Naive thymus-derived CD8-positive, alpha-beta T cell (primary cell): ENCODE measurements at regions of chr6 and their contacts with region 1.

Region 1: DNA sequence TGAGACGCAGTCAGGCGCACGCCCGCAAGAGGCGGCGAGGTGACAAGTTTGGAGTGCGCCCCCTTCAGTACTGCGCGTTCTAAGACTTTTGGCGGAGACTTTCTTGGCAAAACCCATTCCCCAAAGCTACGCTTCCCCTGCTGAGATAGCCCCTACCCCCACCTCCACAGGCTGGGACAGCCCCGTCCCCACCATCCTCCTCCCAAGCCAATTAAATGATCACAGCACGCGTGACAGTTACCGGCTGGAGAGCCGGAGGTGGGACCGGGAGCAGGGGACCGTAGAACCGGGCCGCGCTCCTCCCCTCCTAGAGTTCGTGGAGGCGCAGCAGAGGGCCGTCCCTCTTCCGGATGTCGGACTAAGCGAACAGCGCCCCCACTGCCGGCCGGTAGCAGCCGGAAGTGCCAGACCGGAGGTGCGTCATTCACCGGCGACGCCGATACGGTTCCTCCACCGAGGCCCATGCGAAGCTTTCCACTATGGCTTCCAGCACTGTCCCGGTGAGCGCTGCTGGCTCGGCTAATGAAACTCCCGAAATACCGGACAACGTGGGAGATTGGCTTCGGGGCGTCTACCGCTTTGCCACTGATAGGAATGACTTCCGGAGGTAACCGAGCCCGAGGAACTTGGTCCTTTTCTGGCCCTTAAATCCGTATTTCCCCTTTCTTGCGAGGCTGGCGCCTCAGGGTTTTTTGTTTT is at the start of gene TOMM6:
- DNase-seq: peak; percentile 90 to 97 (median 95)
- ATAC-seq: peak; percentile 80
- H3K4me3 Mint-ChIP-seq: peak within 1 kb of the TSS; percentile 89 to 97 (median 94)
- H3K27ac Mint-ChIP-seq: peak within 1 kb of the TSS; percentile 92 to 98 (median 96)
- H3K4me1 Mint-ChIP-seq: peaks cover 2 to 28% (median 13%) of the 10 kb centered on the region in 4 donors
- H3K27me3 Mint-ChIP-seq: peaks cover 0 to 4% (median 0%) of the 10 kb centered on the region in 5 donors
- polyA plus RNA-seq, gene TOMM6: 433 to 440 (median 433) TPM

Region 2: GRCh38 chr6:41735427-41736356 is 51.7 kb before region 1 on chr6 and contains the start of gene TFEB:
- POLR2A ChIA-PET with region 1: interaction called, 26 read pairs
- DNase-seq: peak; percentile 85 to 96 (median 93)
- ATAC-seq: peak; percentile 66 to 67
- H3K4me3 Mint-ChIP-seq: peak within 1 kb of the TSS; percentile 33 to 92 (median 80)
- H3K27ac Mint-ChIP-seq: peak within 1 kb of the TSS in 8 of 10 donors; percentile 15 to 90 (median 74)
- H3K4me1 Mint-ChIP-seq: peaks cover 8 to 36% (median 34%) of the 10 kb centered on the region in 4 donors
- H3K27me3 Mint-ChIP-seq: no peaks in the 10 kb centered on the region
- polyA plus RNA-seq, gene TFEB: 2.6 to 9.4 (median 6.1) TPM

Region 3: GRCh38 chr6:41801380-41801779 is 14.0 kb after region 1 on chr6:
- POLR2A ChIA-PET with region 1: interaction called, 11 read pairs
- DNase-seq: no peak
- ATAC-seq: no peak
- H3K4me3 Mint-ChIP-seq: no peak overlapping the region
- H3K27ac Mint-ChIP-seq: peak overlapping the region in 1 of 10 donors; percentile 48
- H3K4me1 Mint-ChIP-seq: peaks cover 0 to 2% (median 0%) of the 10 kb centered on the region in 4 donors
- H3K27me3 Mint-ChIP-seq: no peaks in the 10 kb centered on the region

Region 4: GRCh38 chr6:41818271-41819054 is 31.1 kb after region 1 on chr6:
- POLR2A ChIA-PET with region 1: no interaction called
- DNase-seq: no peak
- ATAC-seq: no peak
- H3K4me3 Mint-ChIP-seq: no peak overlapping the region
- H3K27ac Mint-ChIP-seq: no peak overlapping the region
- H3K4me1 Mint-ChIP-seq: no peaks in the 10 kb centered on the region
- H3K27me3 Mint-ChIP-seq: no peaks in the 10 kb centered on the region

Region 5: DNA sequence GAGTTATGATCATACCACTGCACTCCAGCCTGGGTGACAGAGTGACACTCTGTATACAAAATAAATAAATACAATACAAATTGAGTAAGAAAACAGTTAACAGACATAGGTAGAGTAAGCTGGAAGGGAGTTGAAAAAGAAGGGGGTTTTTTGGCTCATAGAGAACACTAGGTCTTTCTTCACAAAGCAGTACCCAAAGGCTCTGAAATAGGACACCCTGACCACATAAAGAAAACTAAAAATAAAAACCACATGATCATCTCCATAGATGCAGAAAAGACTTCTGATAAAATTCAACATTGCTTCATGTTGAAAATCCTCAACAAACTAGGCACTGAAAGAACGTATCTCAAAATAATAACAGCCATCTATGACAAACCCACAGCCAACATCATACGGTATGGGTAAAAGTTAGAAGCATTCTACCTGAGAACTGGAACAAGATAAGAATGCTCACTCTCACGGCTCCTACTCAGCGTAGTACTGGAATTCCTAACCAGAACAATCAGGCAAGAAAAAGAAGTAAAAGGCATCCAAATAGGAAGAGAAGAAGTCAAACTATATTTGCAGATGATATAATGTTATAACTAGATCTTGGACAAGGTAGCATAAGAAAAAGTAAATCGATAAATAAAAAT is 48.8 kb after region 1 on chr6:
- POLR2A ChIA-PET with region 1: no interaction called
- DNase-seq: peak in 2 of 10 donors; percentile 0 to 5
- ATAC-seq: peak in 1 of 2 donors; percentile 59
- H3K4me3 Mint-ChIP-seq: no peak overlapping the region
- H3K27ac Mint-ChIP-seq: peak overlapping the region in 3 of 10 donors; percentile 1 to 29 (median 26)
- H3K4me1 Mint-ChIP-seq: peaks cover 4 to 10% (median 5%) of the 10 kb centered on the region in 4 donors
- H3K27me3 Mint-ChIP-seq: no peaks in the 10 kb centered on the region

Region 6: DNA sequence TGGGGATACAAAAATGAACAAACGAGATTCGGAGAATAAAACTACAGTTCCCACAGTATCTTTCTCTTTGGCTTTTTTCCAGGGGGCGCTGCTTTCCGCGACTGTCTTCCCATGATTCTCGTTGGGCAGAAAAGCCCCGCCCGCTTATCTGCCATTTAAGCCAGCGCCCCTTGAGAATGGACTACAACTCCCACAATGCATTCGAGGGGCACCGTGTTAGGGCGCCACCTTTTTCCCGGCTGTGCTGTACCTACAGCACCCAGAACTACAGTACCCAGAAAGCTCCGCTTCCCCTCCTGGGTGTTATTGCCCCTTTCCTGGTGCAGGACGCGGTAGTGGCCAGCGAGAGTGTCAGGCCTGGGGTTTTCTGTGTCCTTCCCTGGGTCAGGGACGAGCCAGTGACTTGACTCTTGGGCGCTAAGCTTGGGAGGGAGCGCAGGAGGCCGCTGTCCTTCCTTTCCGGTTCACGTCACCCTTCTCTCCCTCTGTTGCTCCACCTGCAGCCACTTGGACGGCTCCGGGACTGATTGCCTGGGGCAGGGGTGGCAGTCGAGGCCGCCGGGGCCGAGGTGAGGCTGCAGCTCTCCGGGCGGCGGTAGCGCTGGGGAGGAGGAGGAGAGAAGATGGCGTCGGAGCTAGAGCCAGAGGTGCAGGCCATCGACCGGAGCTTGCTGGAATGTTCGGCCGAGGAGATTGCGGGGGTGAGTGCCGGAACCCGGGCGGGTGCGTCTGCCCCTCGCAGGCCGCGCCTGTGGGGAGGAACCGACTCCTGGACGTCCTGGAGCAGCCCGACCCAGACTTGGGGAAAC is 776.5 kb after region 1 on chr6 and contains the start of gene UBR2:
- POLR2A ChIA-PET with region 1: interaction called, 14 read pairs
- DNase-seq: peak; percentile 74 to 98 (median 92)
- ATAC-seq: peak; percentile 94 to 96
- H3K4me3 Mint-ChIP-seq: peak within 1 kb of the TSS; percentile 94 to 100 (median 96)
- H3K27ac Mint-ChIP-seq: peak within 1 kb of the TSS; percentile 89 to 98 (median 96)
- H3K4me1 Mint-ChIP-seq: peaks cover 15 to 44% (median 33%) of the 10 kb centered on the region in 4 donors
- H3K27me3 Mint-ChIP-seq: no peaks in the 10 kb centered on the region
- polyA plus RNA-seq, gene UBR2: 7.0 to 9.1 (median 8.1) TPM